ENCODE measurements at regions of chr11 and their contacts with region 1.

Region 1: GRCh38 chr11:45852708-45853101 is 5.4 kb downstream of the CRY2 start:
- DNase-seq: no peak
- H3K4me3 ChIP-seq: no peak overlapping the region
- H3K27ac ChIP-seq: no peak overlapping the region
- H3K4me1 ChIP-seq: peaks cover 21% of the 10 kb centered on the region
- H3K27me3 ChIP-seq: no peaks in the 10 kb centered on the region
- CTCF ChIP-seq: no peak
- EP300 ChIP-seq: no peak
- POLR2A ChIP-seq: no peak

Region 2: DNA sequence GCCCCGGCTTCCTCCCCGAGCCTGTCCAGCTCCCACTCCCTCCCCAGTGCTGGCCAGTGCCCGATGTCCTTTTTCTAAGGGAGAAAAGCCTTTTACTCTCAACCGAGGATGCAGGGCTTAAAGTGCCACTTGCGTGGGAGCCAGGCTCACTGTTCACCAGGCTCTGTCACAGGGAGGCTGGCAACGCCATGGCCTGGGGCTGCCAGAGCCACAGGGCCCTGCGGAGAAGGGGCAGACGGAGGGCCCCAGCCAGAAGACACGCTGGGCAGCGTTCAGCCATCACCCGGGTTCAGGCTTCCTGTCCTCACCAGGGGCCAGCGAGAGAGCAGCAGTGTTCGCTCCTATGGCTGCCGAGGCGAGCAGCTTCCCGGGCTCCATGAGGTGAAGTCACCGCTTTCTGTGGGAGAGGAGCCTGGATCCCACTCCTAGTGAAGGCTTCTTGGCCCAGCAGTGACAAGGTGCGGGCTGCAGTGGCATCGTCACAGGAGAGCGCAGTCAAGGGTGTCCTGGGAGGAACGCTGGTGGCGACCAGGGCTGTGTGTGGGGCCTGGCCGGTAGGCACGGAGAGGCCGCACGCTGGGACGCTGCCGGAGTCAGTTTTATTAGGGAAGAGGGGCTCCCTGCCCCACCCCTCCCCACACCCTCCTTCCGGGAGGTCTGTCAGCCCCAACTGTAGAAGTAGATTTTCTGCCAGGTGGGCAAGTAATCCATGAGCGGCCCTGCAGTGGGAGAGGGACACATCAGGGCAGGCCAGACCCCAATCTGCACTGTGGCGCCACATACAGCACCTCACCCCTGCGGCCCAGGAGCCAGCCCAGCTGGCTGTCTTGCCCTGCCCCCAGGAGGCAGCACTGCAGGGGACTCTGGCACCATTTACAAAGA is 57.1 kb after region 1 on chr11:
- intact Hi-C with region 1: loop called in 1 of 4 experiments (anchors 5 kb)
- DNase-seq: no peak
- H3K4me3 ChIP-seq: no peak overlapping the region
- H3K27ac ChIP-seq: no peak overlapping the region
- H3K4me1 ChIP-seq: no peaks in the 10 kb centered on the region
- H3K27me3 ChIP-seq: no peaks in the 10 kb centered on the region
- CTCF ChIP-seq: no peak
- EP300 ChIP-seq: no peak
- POLR2A ChIP-seq: no peak

Measured in ovary (tissue), 10 donors.